ENCODE measurements at regions of chr16 and their contacts with region 1.

Region 1: DNA sequence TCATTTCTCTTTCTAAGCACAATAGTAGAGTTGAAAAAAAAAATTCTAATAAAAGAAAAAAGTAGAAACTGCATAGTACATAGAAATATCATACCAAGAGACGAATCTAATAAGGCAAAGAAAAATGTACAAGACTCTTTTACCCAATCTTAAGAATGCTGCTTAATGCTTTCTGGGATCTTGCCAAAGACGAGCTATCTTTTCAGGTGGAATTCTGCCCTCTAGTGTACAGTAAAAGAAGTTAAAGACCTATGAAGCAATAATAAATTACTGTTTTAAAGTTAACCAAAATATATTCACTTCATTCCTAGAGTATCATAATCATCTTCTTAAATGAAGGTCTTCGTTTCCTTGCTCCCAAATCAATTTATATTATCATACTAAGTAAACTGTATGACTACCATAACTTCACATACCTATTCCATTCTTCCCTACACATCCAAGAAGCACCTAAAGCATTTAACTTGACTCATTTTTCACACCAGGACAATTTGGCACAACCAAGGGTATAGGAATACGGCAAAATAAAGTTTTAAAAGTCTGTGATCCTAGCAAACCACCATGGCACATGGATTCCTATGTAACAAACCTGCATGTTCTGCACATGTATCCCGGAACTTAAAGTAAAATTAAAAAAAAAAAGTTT is 47.7 kb downstream of the CFDP1 start:
- DNase-seq: peak; percentile 85

Region 2: GRCh38 chr16:75244844-75245758 is 140.5 kb before region 1 on chr16:
- in situ Hi-C with region 1: loop called (anchors 25 kb)
- DNase-seq: peak; percentile 99

Measured in ACHN (cell line).